Body of pancreas (tissue), 4 donors: ENCODE measurements at regions of chr19 and their contacts with region 1.

Region 1: GRCh38 chr19:38402967-38403861 is at the start of gene FAM98C:
- DNase-seq: peak; percentile 97 to 98 (median 97)
- ATAC-seq: peak; percentile 100
- H3K4me3 ChIP-seq: peak within 1 kb of the TSS; percentile 75 to 83
- H3K27ac ChIP-seq: peak within 1 kb of the TSS; percentile 52 to 88 (median 72)
- H3K4me1 ChIP-seq: peaks cover 10% of the 10 kb centered on the region
- H3K27me3 ChIP-seq: peaks cover 0 to 5% of the 10 kb centered on the region in 2 donors
- CTCF ChIP-seq: peak; percentile 97 to 100 (median 98)
- POLR2A ChIP-seq: peak; percentile 41 to 68 (median 66)
- total RNA-seq, gene FAM98C: 24.9 to 51.4 TPM

Region 2: DNA sequence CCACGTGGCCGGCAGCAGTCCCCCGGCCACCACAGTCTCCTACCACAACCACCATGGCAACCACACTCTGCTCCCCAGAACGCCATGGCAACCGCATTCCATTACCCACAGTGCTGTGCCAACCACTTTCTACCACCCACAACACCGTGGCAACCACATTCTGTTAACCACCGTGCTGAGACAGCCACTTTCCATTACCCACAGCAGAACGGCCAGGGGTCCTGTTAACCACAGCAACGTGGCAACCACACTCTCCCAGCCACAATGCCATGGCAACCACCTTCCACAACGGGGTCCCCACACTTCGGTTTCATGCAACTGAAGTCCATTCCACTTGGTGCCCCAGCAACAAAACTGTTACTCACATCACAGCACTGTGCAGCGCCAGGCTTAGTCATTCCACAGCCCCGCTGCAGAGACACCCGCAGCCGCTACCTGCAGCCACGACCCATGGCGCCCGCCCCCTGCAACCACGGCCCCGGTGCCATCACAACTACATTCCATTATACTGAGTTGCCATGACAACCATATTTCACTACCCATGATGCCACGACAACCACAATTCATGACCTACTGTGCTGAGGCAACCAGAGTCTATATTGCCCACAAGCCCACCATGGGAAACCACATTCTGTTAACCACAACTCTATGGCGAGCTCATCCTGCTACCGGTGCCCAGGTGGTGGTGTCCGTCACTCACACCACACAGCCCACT is 189.1 kb before region 1 on chr19:
- intact Hi-C with region 1: no loop called
- DNase-seq: no peak
- ATAC-seq: no peak
- H3K4me3 ChIP-seq: no peak overlapping the region
- H3K27ac ChIP-seq: no peak overlapping the region
- H3K4me1 ChIP-seq: no peaks in the 10 kb centered on the region
- H3K27me3 ChIP-seq: peaks cover 0 to 4% of the 10 kb centered on the region in 2 donors
- CTCF ChIP-seq: no peak
- POLR2A ChIP-seq: no peak

Region 3: DNA sequence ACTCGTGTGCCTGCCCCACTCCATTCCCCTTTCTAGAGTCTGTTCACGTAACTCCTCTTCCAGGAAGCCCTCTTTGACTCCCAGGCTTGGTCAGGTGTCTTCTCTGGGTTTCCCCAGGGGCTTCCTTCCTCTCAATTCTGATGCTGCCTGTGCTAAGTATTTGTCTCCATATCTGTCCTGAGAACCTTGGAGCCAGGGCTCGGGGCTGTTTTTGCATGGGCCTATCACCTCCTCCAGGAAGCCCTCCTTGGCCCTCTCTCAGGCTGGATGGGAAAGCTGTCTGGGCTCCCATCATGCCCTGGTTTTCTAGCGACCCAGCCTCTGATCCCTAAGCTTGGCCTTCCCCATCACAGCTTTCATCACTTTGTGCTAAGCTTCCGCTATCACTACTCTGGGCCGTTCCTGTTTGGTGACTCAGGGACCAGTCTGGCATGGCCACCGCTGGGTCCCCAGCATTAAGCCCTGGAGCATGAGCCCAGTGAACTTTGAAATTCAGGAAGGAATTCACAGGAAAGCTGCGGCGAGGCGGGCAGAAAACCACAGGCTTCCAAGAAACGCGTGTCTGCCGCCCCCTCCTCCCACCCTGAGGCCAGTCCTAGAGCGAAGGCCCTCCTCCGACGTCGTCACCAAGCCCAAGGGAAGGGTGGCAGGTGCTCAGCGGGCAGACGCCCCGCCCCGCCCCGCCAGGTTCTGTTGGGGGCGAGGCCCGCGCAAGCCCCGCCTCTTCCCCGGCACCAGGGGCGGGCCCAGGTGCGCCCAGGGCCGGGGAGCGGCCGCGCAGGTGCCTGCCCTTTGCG is 139.3 kb before region 1 on chr19:
- intact Hi-C with region 1: no loop called
- DNase-seq: peak in 3 of 4 donors; percentile 97 to 98 (median 98)
- ATAC-seq: peak; percentile 91
- H3K4me3 ChIP-seq: peak overlapping the region in 1 of 2 donors; percentile 78
- H3K27ac ChIP-seq: peak overlapping the region; percentile 90 to 97 (median 94)
- H3K4me1 ChIP-seq: peaks cover 47% of the 10 kb centered on the region
- H3K27me3 ChIP-seq: no peaks in the 10 kb centered on the region
- CTCF ChIP-seq: no peak
- POLR2A ChIP-seq: no peak

Region 4: GRCh38 chr19:38711726-38712153 is 308.5 kb after region 1 on chr19:
- intact Hi-C with region 1: no loop called
- DNase-seq: peak in 3 of 4 donors; percentile 55 to 62 (median 55)
- ATAC-seq: no peak
- H3K4me3 ChIP-seq: no peak overlapping the region
- H3K27ac ChIP-seq: peak overlapping the region; percentile 18 to 74 (median 59)
- H3K4me1 ChIP-seq: peaks cover 79% of the 10 kb centered on the region
- H3K27me3 ChIP-seq: no peaks in the 10 kb centered on the region
- CTCF ChIP-seq: no peak
- POLR2A ChIP-seq: no peak

Region 5: GRCh38 chr19:38929929-38930775 is 526.9 kb after region 1 on chr19 and contains the start of gene SARS2:
- intact Hi-C with region 1: loop called (anchors 10 kb)
- DNase-seq: peak; percentile 93 to 94 (median 93)
- ATAC-seq: peak; percentile 91
- H3K4me3 ChIP-seq: peak within 1 kb of the TSS; percentile 57 to 82
- H3K27ac ChIP-seq: peak within 1 kb of the TSS; percentile 54 to 93 (median 80)
- H3K4me1 ChIP-seq: peaks cover 38% of the 10 kb centered on the region
- H3K27me3 ChIP-seq: no peaks in the 10 kb centered on the region
- CTCF ChIP-seq: peak; percentile 99 to 100 (median 99)
- POLR2A ChIP-seq: no peak
- total RNA-seq, gene SARS2: 25.2 to 34.6 TPM